Activated CD4-positive, alpha-beta T cell treated with anti-CD3 and anti-CD28 coated beads, Interleukin-2, amount 10 ng/mL, durations not matched to agents 24 days and 14 days (primary cell): ENCODE measurements at regions of chr7 and their contacts with region 1.

Region 1: GRCh38 chr7:65981965-65982792 is at the start of gene GUSB:
- DNase-seq: peak; percentile 97
- H3K4me3 Mint-ChIP-seq: peak within 1 kb of the TSS; percentile 87
- H3K27ac Mint-ChIP-seq: peak within 1 kb of the TSS; percentile 91
- H3K4me1 Mint-ChIP-seq: peaks cover 10% of the 10 kb centered on the region
- H3K27me3 Mint-ChIP-seq: no peaks in the 10 kb centered on the region
- total RNA-seq, gene GUSB: 52.2 and 54.7 TPM in 2 replicates

Region 2: DNA sequence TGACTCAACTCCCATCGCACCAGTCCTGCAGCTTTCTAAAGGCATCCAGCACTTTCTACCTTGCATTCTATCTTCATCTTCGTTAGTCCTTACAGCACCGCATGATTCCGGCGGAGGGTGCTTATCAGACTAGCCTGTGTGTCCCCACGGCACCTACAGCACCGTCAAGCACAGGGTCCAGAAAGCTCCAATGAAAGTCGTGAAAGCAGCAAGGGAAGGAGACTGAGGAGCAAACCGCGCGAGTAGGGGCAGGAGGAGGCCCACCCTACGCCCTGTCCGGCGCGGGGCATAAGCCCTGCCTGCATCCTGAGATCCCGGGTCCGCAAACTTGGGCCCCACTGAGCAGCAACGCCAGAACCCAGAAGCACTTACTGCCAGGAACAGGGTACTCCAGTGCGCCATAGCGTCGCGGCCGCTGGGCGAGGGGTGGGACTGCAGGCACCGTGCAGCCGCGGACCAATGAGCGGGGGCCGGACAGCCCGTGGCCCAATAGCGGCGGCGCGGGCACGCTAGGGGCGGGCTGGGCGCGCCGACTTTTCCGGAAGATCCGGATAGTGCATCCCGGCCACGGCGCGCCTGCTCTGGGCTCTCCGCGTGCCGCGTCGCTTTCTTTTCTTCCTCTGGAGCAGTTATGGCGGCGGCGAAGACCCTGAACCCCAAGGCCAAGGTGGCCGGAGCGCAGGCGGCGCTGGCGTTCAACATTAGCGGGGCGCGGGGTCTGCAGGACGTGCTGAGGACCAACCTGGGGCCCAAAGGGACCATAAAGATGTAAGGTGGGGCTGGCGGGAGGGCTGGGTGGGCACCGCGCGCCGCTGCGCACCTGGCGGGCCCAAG is 231.5 kb before region 1 on chr7:
- intact Hi-C with region 1: loop called (anchors 2 kb)
- DNase-seq: peak; percentile 98
- H3K4me3 Mint-ChIP-seq: peak overlapping the region; percentile 87
- H3K27ac Mint-ChIP-seq: peak overlapping the region; percentile 87
- H3K4me1 Mint-ChIP-seq: peaks cover 6% of the 10 kb centered on the region
- H3K27me3 Mint-ChIP-seq: no peaks in the 10 kb centered on the region

Region 3: DNA sequence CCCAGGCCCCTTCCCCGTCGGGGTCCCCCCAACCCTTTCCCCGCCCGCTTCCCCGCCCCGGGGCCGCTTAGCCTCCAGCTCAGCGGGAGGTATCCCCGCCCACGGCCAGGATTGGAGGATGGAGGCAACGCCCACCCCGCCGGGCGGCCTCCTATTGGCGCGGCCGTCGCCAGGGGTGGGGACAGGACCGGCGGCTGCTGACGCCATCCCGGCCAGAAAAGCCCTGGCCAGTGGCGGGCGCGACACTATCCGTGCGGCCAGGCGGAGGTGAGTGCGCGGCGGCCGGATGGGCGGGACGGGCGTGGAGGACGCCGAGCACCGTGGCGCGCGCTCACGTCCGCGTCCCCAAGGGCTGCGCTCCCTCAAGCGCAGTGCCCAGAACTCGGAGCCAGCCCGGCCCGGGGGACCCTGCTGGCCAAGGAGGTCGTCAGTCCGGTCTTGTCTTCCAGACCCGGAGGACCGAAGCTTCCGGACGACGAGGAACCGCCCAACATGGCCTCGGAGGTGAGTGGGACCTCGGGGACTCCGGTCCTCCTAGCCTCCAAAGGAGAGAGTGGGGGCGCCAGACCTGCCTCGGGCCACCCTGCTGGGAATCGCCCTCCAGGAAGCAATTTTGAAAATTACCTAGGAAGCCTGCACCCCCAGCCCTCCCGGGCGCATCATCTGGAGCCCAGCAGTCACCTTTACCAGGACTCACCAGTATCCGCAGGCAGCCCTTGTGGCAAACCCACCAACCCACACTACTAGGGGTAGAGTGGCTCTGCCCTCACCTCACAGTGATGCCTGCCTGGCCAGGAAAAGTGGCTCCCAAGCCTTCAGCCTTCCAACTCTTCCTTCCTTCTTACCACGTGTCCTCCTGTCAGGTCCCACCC is 93.6 kb after region 1 on chr7 and contains the start of gene ASL:
- intact Hi-C with region 1: loop called (anchors 1 kb)
- DNase-seq: peak; percentile 98
- H3K4me3 Mint-ChIP-seq: peak within 1 kb of the TSS; percentile 89
- H3K27ac Mint-ChIP-seq: peak within 1 kb of the TSS; percentile 65
- H3K4me1 Mint-ChIP-seq: peaks cover 18% of the 10 kb centered on the region
- H3K27me3 Mint-ChIP-seq: peaks cover 2% of the 10 kb centered on the region
- total RNA-seq, gene ASL: 37.8 and 40.5 TPM in 2 replicates

Region 4: GRCh38 chr7:66493235-66494181 is 511.3 kb after region 1 on chr7:
- intact Hi-C with region 1: loop called (anchors 2 kb)
- DNase-seq: peak; percentile 99
- H3K4me3 Mint-ChIP-seq: peak overlapping the region; percentile 92
- H3K27ac Mint-ChIP-seq: peak overlapping the region; percentile 95
- H3K4me1 Mint-ChIP-seq: peaks cover 12% of the 10 kb centered on the region
- H3K27me3 Mint-ChIP-seq: no peaks in the 10 kb centered on the region